PC-9 (cell line): ENCODE measurements at regions of chr4 and their contacts with region 1.

Region 1: GRCh38 chr4:20422398-20422797 is 170.7 kb downstream of the SLIT2 start:
- DNase-seq: peak in 1 of 2 experiments; percentile 56
- H3K4me3 ChIP-seq: no peak overlapping the region
- H3K27ac ChIP-seq: no peak overlapping the region
- H3K4me1 ChIP-seq: no peaks in the 10 kb centered on the region
- H3K27me3 ChIP-seq: no peaks in the 10 kb centered on the region
- CTCF ChIP-seq: peak; percentile 46

Region 2: GRCh38 chr4:20172070-20172760 is 250.2 kb before region 1 on chr4:
- CTCF ChIA-PET with region 1: no interaction called
- POLR2A ChIA-PET with region 1: no interaction called
- intact Hi-C with region 1: no loop called
- DNase-seq: no peak
- H3K4me3 ChIP-seq: no peak overlapping the region
- H3K27ac ChIP-seq: no peak overlapping the region
- H3K4me1 ChIP-seq: no peaks in the 10 kb centered on the region
- H3K27me3 ChIP-seq: no peaks in the 10 kb centered on the region
- CTCF ChIP-seq: no peak

Region 3: DNA sequence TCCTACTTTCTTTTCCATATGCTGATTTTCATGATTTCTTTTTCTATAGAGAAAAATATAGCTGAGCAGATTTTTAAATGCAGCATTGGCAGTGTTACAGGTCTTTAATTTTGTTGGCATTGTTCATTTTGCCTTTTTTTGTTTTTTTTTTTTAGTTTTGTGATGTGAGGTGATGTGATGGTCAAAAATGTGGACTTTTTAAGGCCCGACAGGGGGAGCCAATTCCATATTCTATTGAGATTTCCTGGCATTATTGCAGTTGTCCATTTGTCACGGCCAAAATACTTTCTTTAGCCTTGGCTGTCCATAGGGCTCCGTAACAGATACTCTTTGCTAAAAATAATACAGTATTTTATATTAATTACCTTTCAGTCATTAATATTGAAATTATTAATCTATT is 122.9 kb before region 1 on chr4:
- CTCF ChIA-PET with region 1: no interaction called
- POLR2A ChIA-PET with region 1: no interaction called
- intact Hi-C with region 1: loop called (anchors 10 kb)
- DNase-seq: no peak
- H3K4me3 ChIP-seq: no peak overlapping the region
- H3K27ac ChIP-seq: no peak overlapping the region
- H3K4me1 ChIP-seq: no peaks in the 10 kb centered on the region
- H3K27me3 ChIP-seq: no peaks in the 10 kb centered on the region
- CTCF ChIP-seq: peak; percentile 30; the same call in 1 of the 2 replicates

Region 4: GRCh38 chr4:20391198-20391597 is 31.2 kb before region 1 on chr4:
- CTCF ChIA-PET with region 1: interaction called, 10 read pairs
- POLR2A ChIA-PET with region 1: no interaction called
- intact Hi-C with region 1: no loop called
- DNase-seq: no peak
- H3K4me3 ChIP-seq: no peak overlapping the region
- H3K27ac ChIP-seq: no peak overlapping the region
- H3K4me1 ChIP-seq: no peaks in the 10 kb centered on the region
- H3K27me3 ChIP-seq: no peaks in the 10 kb centered on the region
- CTCF ChIP-seq: no peak

Region 5: GRCh38 chr4:20544645-20545044 is 122.2 kb after region 1 on chr4:
- CTCF ChIA-PET with region 1: no interaction called
- POLR2A ChIA-PET with region 1: no interaction called
- intact Hi-C with region 1: loop called (anchors 1 kb)
- DNase-seq: no peak
- H3K4me3 ChIP-seq: no peak overlapping the region
- H3K27ac ChIP-seq: no peak overlapping the region
- H3K4me1 ChIP-seq: no peaks in the 10 kb centered on the region
- H3K27me3 ChIP-seq: no peaks in the 10 kb centered on the region
- CTCF ChIP-seq: peak; percentile 56

Region 6: GRCh38 chr4:20684852-20685763 is 262.7 kb after region 1 on chr4:
- CTCF ChIA-PET with region 1: no interaction called
- POLR2A ChIA-PET with region 1: no interaction called
- intact Hi-C with region 1: loop called (anchors 1 kb)
- DNase-seq: no peak
- H3K4me3 ChIP-seq: no peak overlapping the region
- H3K27ac ChIP-seq: no peak overlapping the region
- H3K4me1 ChIP-seq: no peaks in the 10 kb centered on the region
- H3K27me3 ChIP-seq: no peaks in the 10 kb centered on the region
- CTCF ChIP-seq: peak; percentile 70

Region 7: DNA sequence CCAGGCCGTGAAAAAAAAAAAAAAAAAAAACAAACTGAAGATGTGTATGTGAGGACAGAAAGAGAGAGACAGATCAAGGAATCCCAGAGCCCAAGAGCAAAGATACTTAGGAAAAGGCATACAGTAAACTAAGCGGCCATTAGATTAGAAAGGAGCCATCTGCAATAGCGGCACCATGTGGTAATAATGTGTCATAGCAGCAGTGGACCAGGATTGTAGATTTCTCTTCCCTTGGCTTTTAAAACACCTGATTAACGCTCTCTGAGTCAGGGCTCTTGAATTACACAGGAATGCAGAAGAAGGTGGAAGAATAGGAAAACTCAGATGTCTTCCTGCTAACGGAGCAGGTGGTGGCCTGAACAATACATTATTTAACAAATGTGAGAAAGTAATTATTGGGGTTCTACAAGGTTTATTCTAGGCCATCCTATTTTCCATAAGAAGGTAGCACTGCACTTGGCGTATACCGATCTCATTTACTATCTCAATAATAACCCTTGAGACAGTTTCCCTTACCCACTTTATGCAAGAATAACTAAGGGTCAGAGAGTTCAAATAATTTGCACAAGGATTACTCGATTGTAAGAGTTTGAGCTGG is 1343.5 kb after region 1 on chr4:
- CTCF ChIA-PET with region 1: no interaction called
- POLR2A ChIA-PET with region 1: no interaction called
- intact Hi-C with region 1: loop called (anchors 2 kb)
- DNase-seq: peak; percentile 49 to 51
- H3K4me3 ChIP-seq: no peak overlapping the region
- H3K27ac ChIP-seq: no peak overlapping the region
- H3K4me1 ChIP-seq: no peaks in the 10 kb centered on the region
- H3K27me3 ChIP-seq: no peaks in the 10 kb centered on the region
- CTCF ChIP-seq: peak; percentile 73